Activated naive CD4-positive, alpha-beta T cell treated with anti-CD3 and anti-CD28 coated beads, Interleukin-2, amount 10 ng/mL, durations not matched to agents 7 days and 5 days (primary cell): ENCODE measurements at regions of chr1 and their contacts with region 1.

Region 1: GRCh38 chr1:21270086-21270689 is 20.1 kb downstream of the ECE1 start:
- DNase-seq: peak; percentile 90
- H3K4me3 Mint-ChIP-seq: no peak overlapping the region
- H3K27ac Mint-ChIP-seq: no peak overlapping the region
- H3K4me1 Mint-ChIP-seq: peaks cover 12% of the 10 kb centered on the region
- H3K27me3 Mint-ChIP-seq: no peaks in the 10 kb centered on the region

Region 2: DNA sequence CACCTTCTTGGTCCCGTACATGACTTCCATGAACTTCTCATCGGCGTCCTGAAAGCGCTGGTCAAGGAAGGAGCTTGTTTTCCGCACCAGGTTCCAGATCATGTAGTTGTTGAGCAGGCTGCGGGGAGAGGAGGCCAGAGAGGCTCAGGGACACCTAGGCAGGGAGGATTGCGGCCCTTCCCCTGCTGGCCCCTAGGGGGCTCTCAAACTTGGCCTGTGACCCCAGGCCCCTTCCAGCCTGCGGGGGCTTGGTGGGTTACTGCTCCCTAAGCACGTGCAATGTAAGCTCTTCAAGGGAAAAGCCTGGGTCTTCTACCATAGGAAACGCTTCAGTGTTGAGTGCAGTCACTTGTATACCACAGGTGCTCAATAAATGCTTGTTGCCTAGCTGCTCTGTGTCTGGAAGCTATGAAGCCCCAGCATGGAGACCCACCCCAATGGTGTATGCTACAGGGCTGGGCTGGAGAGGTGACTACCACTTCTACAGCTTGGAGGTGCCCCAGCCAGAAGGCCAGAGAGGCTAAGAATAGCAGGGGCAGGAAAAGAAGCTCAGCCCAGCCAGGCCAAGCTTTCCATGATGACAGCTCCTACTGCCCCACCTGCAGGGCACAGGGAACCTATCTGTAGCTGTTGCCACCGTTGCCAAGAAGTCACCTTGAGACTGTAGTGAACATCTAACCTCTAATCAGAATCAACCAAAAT is 25.1 kb before region 1 on chr1:
- CTCF ChIA-PET with region 1: interaction called, 41 read pairs
- DNase-seq: no peak
- H3K4me3 Mint-ChIP-seq: no peak overlapping the region
- H3K27ac Mint-ChIP-seq: no peak overlapping the region
- H3K4me1 Mint-ChIP-seq: no peaks in the 10 kb centered on the region
- H3K27me3 Mint-ChIP-seq: no peaks in the 10 kb centered on the region

Region 3: GRCh38 chr1:21289700-21290545 is 19.7 kb after region 1 on chr1 and contains the start of gene ECE1:
- CTCF ChIA-PET with region 1: interaction called, 50 read pairs
- DNase-seq: peak; percentile 78
- H3K4me3 Mint-ChIP-seq: peak within 1 kb of the TSS; percentile 93
- H3K27ac Mint-ChIP-seq: peak within 1 kb of the TSS; percentile 93
- H3K4me1 Mint-ChIP-seq: peaks cover 62% of the 10 kb centered on the region
- H3K27me3 Mint-ChIP-seq: no peaks in the 10 kb centered on the region

Region 4: GRCh38 chr1:21318714-21319159 is 48.5 kb after region 1 on chr1:
- CTCF ChIA-PET with region 1: interaction called, 26 read pairs
- DNase-seq: no peak
- H3K4me3 Mint-ChIP-seq: no peak overlapping the region
- H3K27ac Mint-ChIP-seq: no peak overlapping the region
- H3K4me1 Mint-ChIP-seq: peaks cover 30% of the 10 kb centered on the region
- H3K27me3 Mint-ChIP-seq: no peaks in the 10 kb centered on the region

Region 5: DNA sequence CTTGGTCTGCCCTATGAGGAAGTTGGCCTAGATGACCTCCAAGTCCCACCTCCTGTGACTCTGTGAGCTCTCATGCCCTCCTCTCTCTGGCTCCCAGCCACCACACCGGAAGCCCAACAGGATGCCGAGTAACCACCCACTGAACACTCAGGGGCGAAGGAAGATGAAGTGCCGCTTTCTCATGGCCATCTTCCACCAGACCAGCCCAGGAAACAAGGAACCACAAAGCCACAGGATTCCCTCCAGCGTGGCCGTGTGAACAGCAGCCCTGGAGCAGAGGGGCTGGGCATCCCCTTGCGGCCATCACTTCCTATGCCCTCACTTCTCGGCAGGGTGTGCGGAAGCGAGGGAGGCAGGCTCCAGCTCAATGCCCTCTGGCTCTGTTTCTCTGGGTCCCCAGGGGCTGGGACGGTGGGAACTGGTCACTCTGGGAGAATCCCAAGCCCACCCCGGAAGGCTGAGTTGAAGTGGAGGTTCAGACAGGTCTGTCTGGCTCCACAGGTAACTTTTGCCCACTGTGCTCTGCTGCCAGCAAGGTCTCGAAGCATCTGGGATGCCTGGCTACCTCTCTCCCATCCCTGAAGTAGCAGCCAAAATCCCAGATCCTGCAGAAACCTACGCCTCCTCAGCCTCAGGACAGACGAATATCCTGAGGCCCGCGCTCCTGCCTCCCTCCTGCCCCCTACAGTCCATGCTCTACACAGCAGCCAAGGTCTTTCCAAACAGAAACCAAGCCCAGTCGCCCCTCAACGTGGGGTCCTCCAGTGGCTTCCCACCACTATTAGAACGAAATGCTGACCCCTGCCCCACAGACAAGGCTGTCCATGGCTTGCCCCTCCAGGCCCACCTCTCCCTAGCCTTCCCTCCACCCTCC is 64.3 kb after region 1 on chr1:
- CTCF ChIA-PET with region 1: interaction called, 19 read pairs
- DNase-seq: peak; percentile 88
- H3K4me3 Mint-ChIP-seq: peak overlapping the region; percentile 72
- H3K27ac Mint-ChIP-seq: peak overlapping the region; percentile 96
- H3K4me1 Mint-ChIP-seq: peaks cover 91% of the 10 kb centered on the region
- H3K27me3 Mint-ChIP-seq: no peaks in the 10 kb centered on the region

Region 6: GRCh38 chr1:21355956-21356355 is 85.8 kb after region 1 on chr1:
- CTCF ChIA-PET with region 1: interaction called, 12 read pairs
- DNase-seq: no peak
- H3K4me3 Mint-ChIP-seq: no peak overlapping the region
- H3K27ac Mint-ChIP-seq: no peak overlapping the region
- H3K4me1 Mint-ChIP-seq: no peaks in the 10 kb centered on the region
- H3K27me3 Mint-ChIP-seq: peaks cover 29% of the 10 kb centered on the region